ENCODE measurements at regions of chr2 and their contacts with region 1.

Region 1: GRCh38 chr2:165401285-165401852 is 68.1 kb upstream of the CSRNP3 start:
- DNase-seq: no peak
- ATAC-seq: no peak
- H3K4me3 ChIP-seq: no peak overlapping the region
- H3K27ac ChIP-seq: no peak overlapping the region
- H3K4me1 ChIP-seq: no peaks in the 10 kb centered on the region
- H3K27me3 ChIP-seq: no peaks in the 10 kb centered on the region
- CTCF ChIP-seq: peak in 4 of 5 experiments; percentile 23 to 59 (median 47)
- POLR2A ChIP-seq: no peak

Region 2: GRCh38 chr2:165698444-165698894 is 297.1 kb after region 1 on chr2:
- in situ Hi-C with region 1: loop called in 1 of 4 experiments (anchors 25 kb)
- intact Hi-C with region 1: no loop called
- DNase-seq: no peak
- ATAC-seq: no peak
- H3K4me3 ChIP-seq: no peak overlapping the region
- H3K27ac ChIP-seq: no peak overlapping the region
- H3K4me1 ChIP-seq: no peaks in the 10 kb centered on the region
- H3K27me3 ChIP-seq: no peaks in the 10 kb centered on the region
- CTCF ChIP-seq: peak in 1 of 5 experiments; percentile 18
- POLR2A ChIP-seq: no peak